Mammary epithelial cell (primary cell): ENCODE measurements at regions of chr6 and their contacts with region 1.

Region 1: DNA sequence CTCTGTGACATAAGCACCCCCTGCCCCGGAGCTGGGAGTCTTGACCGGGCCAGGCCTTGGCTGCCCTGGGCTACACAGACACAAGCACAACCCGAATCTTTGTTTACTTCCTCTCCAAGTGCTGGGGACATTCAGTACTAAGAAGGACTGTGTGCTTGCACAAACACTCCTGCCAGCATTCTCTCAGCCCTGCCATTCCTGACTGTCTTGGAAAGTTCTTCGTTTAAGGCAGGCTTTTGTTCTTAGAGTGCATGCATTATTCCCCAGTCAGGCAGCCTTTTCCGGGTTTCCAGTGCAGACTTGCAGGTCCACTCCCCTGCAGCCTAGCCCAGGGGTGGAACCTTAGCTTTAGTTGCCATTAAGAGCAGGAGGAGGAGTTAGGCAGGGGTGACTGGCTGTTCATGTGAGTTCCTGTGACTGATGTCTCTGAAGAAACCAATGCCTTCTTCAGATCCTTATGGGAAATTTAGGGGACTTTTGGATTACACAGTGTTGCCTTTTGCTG is 28.6 kb downstream of the FOXO3 start:
- DNase-seq: peak; percentile 95
- H3K4me3 ChIP-seq: no peak overlapping the region
- H3K27ac ChIP-seq: peak overlapping the region; percentile 74
- H3K4me1 ChIP-seq: peaks cover 62% of the 10 kb centered on the region
- H3K27me3 ChIP-seq: no peaks in the 10 kb centered on the region
- CTCF ChIP-seq: no peak

Region 2: GRCh38 chr6:108302386-108302785 is 287.0 kb before region 1 on chr6:
- CTCF ChIA-PET with region 1: no interaction called
- dilution Hi-C with region 1: no loop called
- in situ Hi-C with region 1: no loop called
- intact Hi-C with region 1: no loop called
- DNase-seq: no peak
- H3K4me3 ChIP-seq: no peak overlapping the region
- H3K27ac ChIP-seq: no peak overlapping the region
- H3K4me1 ChIP-seq: no peaks in the 10 kb centered on the region
- H3K27me3 ChIP-seq: no peaks in the 10 kb centered on the region
- CTCF ChIP-seq: no peak

Region 3: GRCh38 chr6:108565893-108566292 is 23.4 kb before region 1 on chr6:
- CTCF ChIA-PET with region 1: no interaction called
- dilution Hi-C with region 1: no loop called
- in situ Hi-C with region 1: no loop called
- intact Hi-C with region 1: loop called (anchors 1 kb)
- DNase-seq: peak; percentile 52
- H3K4me3 ChIP-seq: no peak overlapping the region
- H3K27ac ChIP-seq: peak overlapping the region; percentile 56
- H3K4me1 ChIP-seq: peaks cover 39% of the 10 kb centered on the region
- H3K27me3 ChIP-seq: no peaks in the 10 kb centered on the region
- CTCF ChIP-seq: no peak